Cardiac septum (tissue), 1 donor: ENCODE measurements at regions of chr2 and their contacts with region 1.

Region 1: GRCh38 chr2:217593732-217594131 is 409.1 kb downstream of the TNS1 start:
- DNase-seq: no peak

Region 2: GRCh38 chr2:217482056-217482710 is 111.5 kb before region 1 on chr2:
- intact Hi-C with region 1: no loop called
- DNase-seq: no peak

Region 3: GRCh38 chr2:217704002-217704401 is 110.3 kb after region 1 on chr2:
- intact Hi-C with region 1: loop called (anchors 1 kb)
- DNase-seq: no peak